ENCODE measurements at regions of chr12 and their contacts with region 1.

Region 1: GRCh38 chr12:16359512-16360491 is 12.4 kb downstream of the MGST1 start:
- DNase-seq: peak; percentile 72
- H3K4me3 ChIP-seq: no peak overlapping the region
- H3K27ac ChIP-seq: no peak overlapping the region
- H3K4me1 ChIP-seq: peaks cover 9% of the 10 kb centered on the region
- CTCF ChIP-seq: peak; percentile 98

Region 2: DNA sequence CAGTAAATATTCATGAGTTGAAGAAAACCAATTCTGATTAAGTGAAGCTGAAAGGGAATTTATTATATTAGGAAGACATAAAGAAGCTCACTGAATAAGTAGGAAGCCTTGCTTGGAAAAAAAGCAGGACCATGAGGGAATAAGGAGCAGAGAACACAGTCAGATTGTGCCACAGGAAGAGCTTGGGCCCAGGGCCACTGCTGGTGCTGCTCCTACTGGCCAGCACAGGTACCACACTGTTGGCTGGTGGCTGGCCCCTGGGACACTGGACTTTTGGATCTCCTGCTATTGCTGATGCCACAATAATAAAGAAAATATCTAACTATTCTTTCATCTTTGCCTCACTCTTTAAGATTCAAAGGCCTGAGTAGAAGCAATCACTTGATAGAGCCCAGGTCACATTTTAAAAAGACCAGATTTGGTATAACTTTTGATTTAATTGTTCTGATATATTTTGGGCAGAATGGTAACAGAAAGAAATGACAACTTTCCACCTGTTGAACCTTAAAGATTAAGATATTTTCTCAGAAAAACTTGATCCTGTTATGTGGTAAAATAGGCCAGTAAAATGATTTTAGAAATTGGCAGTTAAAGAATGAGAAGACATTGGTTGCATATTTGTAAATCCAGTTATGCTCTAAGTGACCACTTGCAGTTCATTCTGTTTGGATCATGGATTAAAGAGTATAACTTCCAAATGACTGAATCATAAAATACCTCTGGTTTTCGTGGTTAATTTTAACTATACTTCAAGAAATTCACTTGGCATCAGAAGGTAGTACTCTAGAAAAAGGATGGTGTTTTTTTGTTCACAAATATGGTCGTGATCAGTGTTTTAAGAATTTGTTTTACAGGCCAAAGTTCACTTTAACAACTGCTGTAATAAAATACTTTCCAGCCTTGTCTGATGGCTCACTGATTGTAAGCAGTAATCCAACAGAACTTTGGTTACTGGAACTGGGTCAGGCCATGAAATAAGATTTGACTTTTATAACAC is 380.4 kb before region 1 on chr12:
- CTCF ChIA-PET with region 1: no interaction called
- POLR2A ChIA-PET with region 1: no interaction called
- intact Hi-C with region 1: loop called (anchors 5 kb)
- DNase-seq: no peak
- H3K4me3 ChIP-seq: no peak overlapping the region
- H3K27ac ChIP-seq: no peak overlapping the region
- H3K4me1 ChIP-seq: peaks cover 27% of the 10 kb centered on the region
- CTCF ChIP-seq: peak; percentile 67

Region 3: GRCh38 chr12:16076553-16076952 is 283.2 kb before region 1 on chr12:
- CTCF ChIA-PET with region 1: no interaction called
- POLR2A ChIA-PET with region 1: no interaction called
- intact Hi-C with region 1: loop called (anchors 2 kb)
- DNase-seq: peak; percentile 55
- H3K4me3 ChIP-seq: no peak overlapping the region
- H3K27ac ChIP-seq: no peak overlapping the region
- H3K4me1 ChIP-seq: no peaks in the 10 kb centered on the region
- CTCF ChIP-seq: peak; percentile 71

Region 4: GRCh38 chr12:16165506-16165905 is 194.3 kb before region 1 on chr12:
- CTCF ChIA-PET with region 1: no interaction called
- POLR2A ChIA-PET with region 1: no interaction called
- intact Hi-C with region 1: loop called (anchors 1 kb)
- DNase-seq: peak; percentile 72
- H3K4me3 ChIP-seq: no peak overlapping the region
- H3K27ac ChIP-seq: no peak overlapping the region
- H3K4me1 ChIP-seq: peaks cover 17% of the 10 kb centered on the region
- CTCF ChIP-seq: peak; percentile 91

Region 5: GRCh38 chr12:16189849-16190248 is 170.0 kb before region 1 on chr12:
- CTCF ChIA-PET with region 1: no interaction called
- POLR2A ChIA-PET with region 1: interaction called, 3 read pairs
- intact Hi-C with region 1: loop called (anchors 1 kb)
- DNase-seq: peak; percentile 67
- H3K4me3 ChIP-seq: no peak overlapping the region
- H3K27ac ChIP-seq: no peak overlapping the region
- H3K4me1 ChIP-seq: peaks cover 9% of the 10 kb centered on the region
- CTCF ChIP-seq: peak; percentile 78

Region 6: GRCh38 chr12:16329578-16329977 is 30.2 kb before region 1 on chr12:
- CTCF ChIA-PET with region 1: no interaction called
- POLR2A ChIA-PET with region 1: no interaction called
- intact Hi-C with region 1: no loop called
- DNase-seq: no peak
- H3K4me3 ChIP-seq: no peak overlapping the region
- H3K27ac ChIP-seq: no peak overlapping the region
- H3K4me1 ChIP-seq: no peaks in the 10 kb centered on the region
- CTCF ChIP-seq: no peak

Region 7: GRCh38 chr12:16458521-16459078 is 98.8 kb after region 1 on chr12:
- CTCF ChIA-PET with region 1: no interaction called
- POLR2A ChIA-PET with region 1: no interaction called
- intact Hi-C with region 1: no loop called
- DNase-seq: no peak
- H3K4me3 ChIP-seq: no peak overlapping the region
- H3K27ac ChIP-seq: no peak overlapping the region
- H3K4me1 ChIP-seq: no peaks in the 10 kb centered on the region
- CTCF ChIP-seq: no peak

Region 8: GRCh38 chr12:16606201-16606849 is 246.5 kb after region 1 on chr12:
- CTCF ChIA-PET with region 1: no interaction called
- POLR2A ChIA-PET with region 1: no interaction called
- intact Hi-C with region 1: no loop called
- DNase-seq: peak; percentile 67
- H3K4me3 ChIP-seq: peak overlapping the region; percentile 77
- H3K27ac ChIP-seq: peak overlapping the region; percentile 80
- H3K4me1 ChIP-seq: peaks cover 57% of the 10 kb centered on the region
- CTCF ChIP-seq: no peak